ENCODE measurements at regions of chr3 and their contacts with region 1.

Region 1: GRCh38 chr3:5026331-5027218 is 47.3 kb downstream of the BHLHE40 start:
- DNase-seq: peak; percentile 92 to 96 (median 93)
- ATAC-seq: peak; percentile 90 to 96 (median 92)
- H3K4me3 ChIP-seq: peak overlapping the region; percentile 13 to 65 (median 56)
- H3K27ac ChIP-seq: peak overlapping the region; percentile 58 to 95 (median 81)
- H3K4me1 ChIP-seq: peaks cover 0 to 23% (median 8%) of the 10 kb centered on the region in 12 donors
- H3K27me3 ChIP-seq: no peaks in the 10 kb centered on the region
- CTCF ChIP-seq: peak; percentile 54 to 87 (median 66)
- POLR2A ChIP-seq: no peak

Region 2: DNA sequence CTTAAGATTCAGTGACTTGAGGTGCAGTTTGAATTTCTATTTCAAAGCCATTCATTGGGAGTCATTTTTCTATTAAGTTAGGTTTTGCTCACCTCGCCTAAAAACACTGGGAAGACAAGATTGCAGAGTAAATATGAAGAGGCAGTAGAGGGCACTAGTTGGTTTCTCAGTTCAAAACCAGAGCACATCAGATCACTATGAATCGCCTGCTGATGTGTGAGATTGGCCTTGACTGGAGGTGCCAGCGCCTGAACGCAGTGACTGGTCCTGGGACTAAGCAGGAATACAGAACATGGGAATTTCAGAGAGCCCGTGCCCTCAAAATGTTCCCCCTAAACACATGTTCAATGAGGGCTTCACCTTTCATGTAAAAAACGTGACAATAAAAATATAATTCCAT is 304.5 kb before region 1 on chr3:
- intact Hi-C with region 1: loop called in 7 of 10 experiments (anchors 1 to 5 kb)
- DNase-seq: peak in 2 of 5 donors; percentile 56 to 60
- ATAC-seq: peak; percentile 59 to 83 (median 74)
- H3K4me3 ChIP-seq: no peak overlapping the region
- H3K27ac ChIP-seq: peak overlapping the region in 9 of 12 donors; percentile 12 to 73 (median 58)
- H3K4me1 ChIP-seq: peaks cover 0 to 66% (median 41%) of the 10 kb centered on the region in 12 donors
- H3K27me3 ChIP-seq: no peaks in the 10 kb centered on the region
- CTCF ChIP-seq: peak in 10 of 12 donors; percentile 37 to 62 (median 48)
- POLR2A ChIP-seq: no peak

Region 3: GRCh38 chr3:4986782-4987537 is 39.6 kb before region 1 on chr3:
- intact Hi-C with region 1: loop called in 6 of 10 experiments (anchors 2 kb)
- DNase-seq: peak; percentile 97 to 99 (median 98)
- ATAC-seq: peak; percentile 84 to 92 (median 88)
- H3K4me3 ChIP-seq: peak overlapping the region; percentile 9 to 100 (median 48)
- H3K27ac ChIP-seq: peak overlapping the region; percentile 83 to 100 (median 100)
- H3K4me1 ChIP-seq: peaks cover 10 to 86% (median 64%) of the 10 kb centered on the region in 12 donors
- H3K27me3 ChIP-seq: no peaks in the 10 kb centered on the region
- CTCF ChIP-seq: peak in 3 of 12 donors; percentile 14 to 27 (median 16)
- POLR2A ChIP-seq: peak in 1 of 2 donors; percentile 70

Measured in heart left ventricle (tissue), 16 donors.